ENCODE measurements at regions of chr14 and their contacts with region 1.

Region 1: GRCh38 chr14:31166271-31166710 is 41.3 kb downstream of the HECTD1 start:
- DNase-seq: no peak
- ATAC-seq: no peak
- H3K4me3 Mint-ChIP-seq: no peak overlapping the region
- H3K27ac Mint-ChIP-seq: no peak overlapping the region
- H3K4me1 Mint-ChIP-seq: no peaks in the 10 kb centered on the region
- H3K27me3 Mint-ChIP-seq: no peaks in the 10 kb centered on the region

Region 2: DNA sequence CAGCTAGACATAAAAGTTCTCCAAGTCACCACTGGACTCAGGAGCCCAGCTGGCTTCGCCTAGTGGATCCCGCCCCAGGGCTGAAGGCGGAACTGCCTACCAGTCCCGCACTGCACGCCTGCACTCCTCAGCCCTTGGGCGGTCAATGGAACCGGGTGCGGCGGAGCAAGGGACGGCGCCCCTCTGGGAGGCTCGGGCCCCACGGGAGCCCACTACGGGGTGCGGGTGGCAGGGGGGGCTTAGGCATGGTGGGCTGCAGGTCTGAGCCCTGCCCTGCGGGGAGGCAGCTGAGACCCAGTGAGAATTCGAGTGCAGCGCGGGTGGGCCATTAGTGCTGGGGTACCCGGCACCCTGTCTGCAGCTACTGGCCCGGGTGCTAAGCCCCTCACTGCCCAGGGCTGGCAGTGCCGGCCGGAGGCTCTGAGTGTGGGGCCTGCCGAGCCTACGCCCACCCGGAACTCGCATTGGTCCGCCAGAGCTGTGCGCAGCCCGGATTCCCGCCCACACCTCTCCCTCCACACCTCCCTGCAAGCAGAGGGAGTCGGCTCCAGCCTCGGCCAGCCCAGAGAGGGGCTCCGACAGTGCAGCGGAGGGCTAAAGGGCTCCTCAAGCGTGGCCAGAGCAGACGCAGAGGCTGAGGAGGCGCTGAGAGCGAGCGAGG is 618.8 kb before region 1 on chr14:
- CTCF ChIA-PET with region 1: no interaction called
- POLR2A ChIA-PET with region 1: interaction called, 10 read pairs
- intact Hi-C with region 1: no loop called
- DNase-seq: no peak
- ATAC-seq: no peak
- H3K4me3 Mint-ChIP-seq: no peak overlapping the region
- H3K27ac Mint-ChIP-seq: no peak overlapping the region
- H3K4me1 Mint-ChIP-seq: no peaks in the 10 kb centered on the region
- H3K27me3 Mint-ChIP-seq: peaks cover 14% of the 10 kb centered on the region

Region 3: DNA sequence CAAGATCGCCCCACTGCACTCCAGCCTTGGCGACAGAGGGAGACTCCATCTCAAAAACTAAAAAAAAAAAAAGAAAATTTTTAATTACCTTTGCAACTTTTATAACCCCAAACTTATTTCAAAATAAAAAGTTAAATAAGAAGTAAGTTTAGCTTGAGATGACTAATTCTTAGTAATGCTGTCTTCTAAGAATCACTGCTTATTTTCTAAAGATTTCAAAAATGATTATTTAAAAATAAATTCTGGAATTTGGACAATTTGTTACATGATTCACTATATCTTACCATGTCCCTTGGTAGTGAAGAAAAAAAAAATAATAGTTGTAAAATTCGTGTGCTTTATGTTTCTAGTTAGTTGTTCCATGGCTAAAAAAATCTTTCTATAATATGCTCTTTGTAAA is 52.9 kb after region 1 on chr14:
- CTCF ChIA-PET with region 1: no interaction called
- POLR2A ChIA-PET with region 1: no interaction called
- intact Hi-C with region 1: no loop called
- DNase-seq: no peak
- ATAC-seq: no peak
- H3K4me3 Mint-ChIP-seq: no peak overlapping the region
- H3K27ac Mint-ChIP-seq: no peak overlapping the region
- H3K4me1 Mint-ChIP-seq: no peaks in the 10 kb centered on the region
- H3K27me3 Mint-ChIP-seq: no peaks in the 10 kb centered on the region

Measured in activated CD4-positive, alpha-beta T cell treated with anti-CD3 and anti-CD28 coated beads for 36 hours (primary cell).